ENCODE measurements at regions of chr2 and their contacts with region 1.

Region 1: GRCh38 chr2:8836971-8837794 is at the start of gene KIDINS220:
- DNase-seq: peak; percentile 82 to 87 (median 84)
- H3K4me3 ChIP-seq: peak within 1 kb of the TSS; percentile 77 to 85
- H3K4me3 Mint-ChIP-seq: peak within 1 kb of the TSS; percentile 99 to 100 (median 100)
- H3K27ac ChIP-seq: peak within 1 kb of the TSS; percentile 61
- H3K27ac Mint-ChIP-seq: peak within 1 kb of the TSS; percentile 87 to 99 (median 99)
- H3K4me1 ChIP-seq: peaks cover 44% of the 10 kb centered on the region
- H3K4me1 Mint-ChIP-seq: peaks cover 33 to 62% (median 46%) of the 10 kb centered on the region in 4 donors
- H3K27me3 ChIP-seq: no peaks in the 10 kb centered on the region
- H3K27me3 Mint-ChIP-seq: no peaks in the 10 kb centered on the region
- total RNA-seq, gene KIDINS220: 52.0 to 52.3 TPM

Region 2: GRCh38 chr2:9003616-9004337 is 166.6 kb after region 1 on chr2 and contains the start of gene MBOAT2:
- CTCF ChIA-PET with region 1: no interaction called
- POLR2A ChIA-PET with region 1: no interaction called
- intact Hi-C with region 1: loop called (anchors 5 kb)
- DNase-seq: peak; percentile 70 to 79 (median 74)
- H3K4me3 ChIP-seq: peak within 1 kb of the TSS in 1 of 2 donors; percentile 55
- H3K4me3 Mint-ChIP-seq: peak within 1 kb of the TSS; percentile 83 to 89 (median 87)
- H3K27ac ChIP-seq: peak within 1 kb of the TSS; percentile 31
- H3K27ac Mint-ChIP-seq: peak within 1 kb of the TSS; percentile 67 to 82 (median 79)
- H3K4me1 ChIP-seq: peaks cover 6% of the 10 kb centered on the region
- H3K4me1 Mint-ChIP-seq: peaks cover 10 to 22% (median 14%) of the 10 kb centered on the region in 4 donors
- H3K27me3 ChIP-seq: no peaks in the 10 kb centered on the region
- H3K27me3 Mint-ChIP-seq: no peaks in the 10 kb centered on the region
- total RNA-seq, gene MBOAT2: 1.5 to 2.0 TPM

Measured in CD4-positive, alpha-beta memory T cell (primary cell).